GM23248 (cell line): ENCODE measurements at regions of chr7 and their contacts with region 1.

Region 1: GRCh38 chr7:100874577-100875355 is at the start of gene SRRT:
- DNase-seq: peak; percentile 100
- H3K4me3 ChIP-seq: peak within 1 kb of the TSS; percentile 92
- H3K27ac ChIP-seq: peak within 1 kb of the TSS; percentile 91
- H3K4me1 ChIP-seq: peaks cover 25% of the 10 kb centered on the region
- H3K27me3 ChIP-seq: no peaks in the 10 kb centered on the region
- total RNA-seq, gene SRRT: 57.1 and 58.9 TPM in 2 replicates

Region 2: GRCh38 chr7:100469227-100470044 is 405.3 kb before region 1 on chr7:
- in situ Hi-C with region 1: loop called (anchors 25 kb)
- DNase-seq: peak; percentile 79
- H3K4me3 ChIP-seq: no peak overlapping the region
- H3K27ac ChIP-seq: no peak overlapping the region
- H3K4me1 ChIP-seq: peaks cover 15% of the 10 kb centered on the region
- H3K27me3 ChIP-seq: no peaks in the 10 kb centered on the region

Region 3: DNA sequence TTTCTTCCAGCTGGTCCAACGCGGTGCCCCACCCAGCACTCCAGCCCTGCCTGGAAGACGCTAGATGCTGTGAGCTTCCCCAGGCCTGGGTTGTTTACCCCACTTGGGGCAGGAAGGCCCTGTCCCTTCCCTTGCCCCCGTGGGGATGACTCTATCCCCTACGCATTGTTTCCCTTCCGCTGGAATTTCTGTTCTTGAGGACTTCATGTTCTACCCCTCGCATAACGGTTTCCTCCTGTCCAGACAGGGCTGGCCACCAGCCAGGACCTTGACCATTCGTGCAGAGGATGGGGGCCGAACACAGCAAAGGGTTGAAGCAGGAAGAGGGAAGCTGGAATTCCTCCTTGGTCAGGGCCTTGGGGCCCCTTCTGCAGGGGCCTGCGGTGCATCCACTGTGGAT is 237.5 kb after region 1 on chr7:
- in situ Hi-C with region 1: no loop called
- DNase-seq: no peak
- H3K4me3 ChIP-seq: no peak overlapping the region
- H3K27ac ChIP-seq: no peak overlapping the region
- H3K4me1 ChIP-seq: peaks cover 22% of the 10 kb centered on the region
- H3K27me3 ChIP-seq: no peaks in the 10 kb centered on the region